PC-9 (cell line): ENCODE measurements at regions of chr3 and their contacts with region 1.

Region 1: GRCh38 chr3:174862143-174862542 is 3.0 kb downstream of the NAALADL2 start:
- DNase-seq: peak; percentile 68 to 82
- H3K4me3 ChIP-seq: no peak overlapping the region
- H3K27ac ChIP-seq: no peak overlapping the region
- H3K4me1 ChIP-seq: peaks cover 60% of the 10 kb centered on the region
- H3K27me3 ChIP-seq: no peaks in the 10 kb centered on the region
- CTCF ChIP-seq: peak; percentile 61

Region 2: DNA sequence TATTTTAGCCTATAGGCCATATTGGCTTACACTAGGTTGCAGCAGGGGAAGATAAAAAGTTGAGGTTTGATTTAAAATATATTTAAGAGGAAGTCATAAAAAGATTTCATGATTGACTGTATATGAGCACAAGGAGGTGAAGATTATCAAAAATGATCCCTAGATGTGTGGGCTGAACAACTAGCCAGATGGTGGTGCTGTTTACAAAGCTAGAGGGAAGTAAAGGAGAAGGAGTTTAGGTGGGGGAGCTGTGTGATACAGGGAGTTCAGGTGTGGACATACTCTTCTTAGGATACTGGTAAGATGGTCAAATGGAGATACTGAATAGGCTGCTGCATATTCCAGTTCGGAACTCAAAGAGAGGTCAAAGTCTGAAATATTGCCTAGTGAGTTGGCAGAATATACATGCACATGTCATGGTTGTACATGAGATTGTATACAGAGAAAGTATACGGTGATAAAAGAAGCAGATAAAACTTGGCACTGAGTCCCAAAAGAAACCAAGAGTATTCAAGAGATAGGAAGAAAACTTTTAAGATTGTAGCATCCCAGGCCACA is 736.8 kb before region 1 on chr3:
- CTCF ChIA-PET with region 1: no interaction called
- POLR2A ChIA-PET with region 1: no interaction called
- intact Hi-C with region 1: loop called (anchors 5 kb)
- DNase-seq: peak in 1 of 2 experiments; percentile 8
- H3K4me3 ChIP-seq: no peak overlapping the region
- H3K27ac ChIP-seq: no peak overlapping the region
- H3K4me1 ChIP-seq: peaks cover 13% of the 10 kb centered on the region
- H3K27me3 ChIP-seq: no peaks in the 10 kb centered on the region
- CTCF ChIP-seq: peak; percentile 55; the same call in 1 of the 2 replicates

Region 3: DNA sequence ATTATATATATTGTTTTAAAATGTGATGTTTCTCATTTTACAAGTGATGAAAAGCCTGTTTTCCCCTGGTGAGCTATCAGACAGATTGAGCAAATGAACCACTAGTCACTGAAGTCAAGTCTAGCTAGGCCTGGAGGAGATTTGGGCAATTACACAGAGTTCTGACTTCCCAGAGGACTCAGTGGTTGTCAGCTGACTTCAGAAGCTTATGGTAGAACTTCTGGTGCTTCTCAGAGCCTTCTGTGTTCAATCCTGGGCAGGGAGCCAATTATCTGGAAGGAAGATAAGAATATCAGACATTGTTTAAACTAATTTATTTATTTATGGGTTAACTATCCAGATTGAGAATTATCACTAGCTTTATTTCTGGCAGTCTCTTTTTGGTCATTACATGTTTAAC is 40.7 kb before region 1 on chr3:
- CTCF ChIA-PET with region 1: no interaction called
- POLR2A ChIA-PET with region 1: no interaction called
- intact Hi-C with region 1: no loop called
- DNase-seq: no peak
- H3K4me3 ChIP-seq: no peak overlapping the region
- H3K27ac ChIP-seq: no peak overlapping the region
- H3K4me1 ChIP-seq: no peaks in the 10 kb centered on the region; the same call in 1 of the 2 replicates
- H3K27me3 ChIP-seq: no peaks in the 10 kb centered on the region
- CTCF ChIP-seq: no peak

Region 4: GRCh38 chr3:174949526-174949925 is 87.4 kb after region 1 on chr3:
- CTCF ChIA-PET with region 1: no interaction called
- POLR2A ChIA-PET with region 1: no interaction called
- intact Hi-C with region 1: loop called (anchors 1 kb)
- DNase-seq: peak; percentile 10 to 35
- H3K4me3 ChIP-seq: no peak overlapping the region
- H3K27ac ChIP-seq: no peak overlapping the region
- H3K4me1 ChIP-seq: peaks cover 13% of the 10 kb centered on the region; the same call in 1 of the 2 replicates
- H3K27me3 ChIP-seq: no peaks in the 10 kb centered on the region
- CTCF ChIP-seq: no peak

Region 5: DNA sequence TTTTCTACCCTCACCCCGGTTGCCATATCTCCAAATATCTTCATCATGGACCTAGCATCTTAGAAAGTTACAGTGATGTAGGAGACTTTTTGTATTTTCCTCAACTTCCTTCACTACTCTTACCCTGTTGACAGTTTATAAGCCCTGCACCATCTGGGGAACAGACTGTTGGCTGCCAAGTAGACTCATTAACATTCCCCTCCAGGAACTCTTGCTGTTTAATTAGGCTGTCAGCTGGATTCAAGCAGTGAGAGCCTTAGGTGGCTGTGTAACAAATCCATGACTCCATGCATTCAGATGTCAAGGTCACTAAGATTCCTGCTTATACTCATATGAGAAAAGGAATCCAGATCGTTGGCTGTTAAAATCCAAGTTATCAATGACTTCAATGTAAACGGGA is 195.3 kb after region 1 on chr3:
- CTCF ChIA-PET with region 1: no interaction called
- POLR2A ChIA-PET with region 1: no interaction called
- intact Hi-C with region 1: no loop called
- DNase-seq: no peak
- H3K4me3 ChIP-seq: no peak overlapping the region
- H3K27ac ChIP-seq: no peak overlapping the region
- H3K4me1 ChIP-seq: no peaks in the 10 kb centered on the region
- H3K27me3 ChIP-seq: no peaks in the 10 kb centered on the region
- CTCF ChIP-seq: no peak

Region 6: GRCh38 chr3:175149675-175150074 is 287.5 kb after region 1 on chr3:
- CTCF ChIA-PET with region 1: no interaction called
- POLR2A ChIA-PET with region 1: no interaction called
- intact Hi-C with region 1: loop called (anchors 1 kb)
- DNase-seq: peak in 1 of 2 experiments; percentile 49
- H3K4me3 ChIP-seq: no peak overlapping the region
- H3K27ac ChIP-seq: no peak overlapping the region
- H3K4me1 ChIP-seq: peaks cover 20% of the 10 kb centered on the region
- H3K27me3 ChIP-seq: no peaks in the 10 kb centered on the region
- CTCF ChIP-seq: no peak

Region 7: GRCh38 chr3:175200391-175201095 is 338.4 kb after region 1 on chr3:
- CTCF ChIA-PET with region 1: no interaction called
- POLR2A ChIA-PET with region 1: no interaction called
- intact Hi-C with region 1: no loop called
- DNase-seq: no peak
- H3K4me3 ChIP-seq: no peak overlapping the region
- H3K27ac ChIP-seq: no peak overlapping the region
- H3K4me1 ChIP-seq: no peaks in the 10 kb centered on the region
- H3K27me3 ChIP-seq: no peaks in the 10 kb centered on the region
- CTCF ChIP-seq: no peak

Region 8: GRCh38 chr3:175743733-175744400 is 881.7 kb after region 1 on chr3:
- CTCF ChIA-PET with region 1: no interaction called
- POLR2A ChIA-PET with region 1: no interaction called
- intact Hi-C with region 1: loop called (anchors 10 kb)
- DNase-seq: peak; percentile 18 to 64
- H3K4me3 ChIP-seq: no peak overlapping the region
- H3K27ac ChIP-seq: no peak overlapping the region
- H3K4me1 ChIP-seq: peaks cover 28% of the 10 kb centered on the region
- H3K27me3 ChIP-seq: no peaks in the 10 kb centered on the region
- CTCF ChIP-seq: no peak

Region 9: GRCh38 chr3:176430244-176431037 is 1568.3 kb after region 1 on chr3:
- CTCF ChIA-PET with region 1: interaction called, 7 read pairs
- POLR2A ChIA-PET with region 1: no interaction called
- intact Hi-C with region 1: loop called (anchors 2 kb)
- DNase-seq: peak; percentile 10 to 49
- H3K4me3 ChIP-seq: no peak overlapping the region
- H3K27ac ChIP-seq: no peak overlapping the region
- H3K4me1 ChIP-seq: no peaks in the 10 kb centered on the region
- H3K27me3 ChIP-seq: no peaks in the 10 kb centered on the region
- CTCF ChIP-seq: peak; percentile 89